ENCODE measurements at regions of chr1 and their contacts with region 1.

Region 1: DNA sequence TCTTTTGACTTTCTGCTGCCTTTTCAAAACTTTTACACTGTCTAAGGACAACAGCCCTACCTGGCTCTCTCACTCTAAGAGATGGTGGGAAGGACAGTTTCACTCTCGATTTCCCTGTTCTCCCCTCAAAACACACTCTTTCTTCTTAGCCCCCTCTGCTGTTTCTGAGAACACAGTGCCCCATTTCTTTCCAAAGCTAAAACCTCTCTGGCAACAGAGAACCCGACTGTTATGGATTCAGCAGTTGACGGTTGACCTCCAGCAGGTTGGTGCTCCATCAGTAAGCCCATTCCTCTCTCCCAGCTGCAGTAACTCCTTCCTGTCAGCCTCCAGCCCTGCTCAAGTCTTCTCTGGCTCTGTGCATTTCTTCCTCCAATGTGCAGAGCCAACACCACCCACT is 88.2 kb upstream of the ABCD3 start:
- DNase-seq: no peak
- H3K4me3 ChIP-seq: no peak overlapping the region
- H3K27ac ChIP-seq: no peak overlapping the region
- H3K4me1 ChIP-seq: peaks cover 78% of the 10 kb centered on the region
- H3K27me3 ChIP-seq: no peaks in the 10 kb centered on the region
- CTCF ChIP-seq: peak; percentile 30; the same call in 1 of the 2 replicates

Region 2: DNA sequence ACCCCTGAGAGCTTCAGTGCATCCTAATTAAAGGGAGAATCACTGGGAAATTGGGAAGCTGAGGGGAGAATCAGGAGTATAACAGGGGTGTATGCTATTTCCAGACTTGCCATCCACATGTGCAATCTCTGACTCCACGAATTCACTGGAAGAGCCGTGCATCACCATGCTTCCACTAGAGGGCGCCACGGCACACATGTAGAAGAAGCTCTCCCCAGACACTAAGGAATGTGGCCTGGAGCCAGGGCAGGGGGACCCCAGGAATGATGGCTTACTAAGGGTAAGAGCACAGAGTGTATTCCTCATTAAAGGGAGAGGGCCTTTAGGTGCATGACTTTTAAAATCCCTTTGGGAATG is 290.5 kb before region 1 on chr1:
- CTCF ChIA-PET with region 1: interaction called, 17 read pairs
- POLR2A ChIA-PET with region 1: interaction called, 4 read pairs
- intact Hi-C with region 1: no loop called
- DNase-seq: peak; percentile 63 to 68
- H3K4me3 ChIP-seq: no peak overlapping the region
- H3K27ac ChIP-seq: no peak overlapping the region
- H3K4me1 ChIP-seq: peaks cover 40% of the 10 kb centered on the region
- H3K27me3 ChIP-seq: no peaks in the 10 kb centered on the region
- CTCF ChIP-seq: peak; percentile 99

Region 3: DNA sequence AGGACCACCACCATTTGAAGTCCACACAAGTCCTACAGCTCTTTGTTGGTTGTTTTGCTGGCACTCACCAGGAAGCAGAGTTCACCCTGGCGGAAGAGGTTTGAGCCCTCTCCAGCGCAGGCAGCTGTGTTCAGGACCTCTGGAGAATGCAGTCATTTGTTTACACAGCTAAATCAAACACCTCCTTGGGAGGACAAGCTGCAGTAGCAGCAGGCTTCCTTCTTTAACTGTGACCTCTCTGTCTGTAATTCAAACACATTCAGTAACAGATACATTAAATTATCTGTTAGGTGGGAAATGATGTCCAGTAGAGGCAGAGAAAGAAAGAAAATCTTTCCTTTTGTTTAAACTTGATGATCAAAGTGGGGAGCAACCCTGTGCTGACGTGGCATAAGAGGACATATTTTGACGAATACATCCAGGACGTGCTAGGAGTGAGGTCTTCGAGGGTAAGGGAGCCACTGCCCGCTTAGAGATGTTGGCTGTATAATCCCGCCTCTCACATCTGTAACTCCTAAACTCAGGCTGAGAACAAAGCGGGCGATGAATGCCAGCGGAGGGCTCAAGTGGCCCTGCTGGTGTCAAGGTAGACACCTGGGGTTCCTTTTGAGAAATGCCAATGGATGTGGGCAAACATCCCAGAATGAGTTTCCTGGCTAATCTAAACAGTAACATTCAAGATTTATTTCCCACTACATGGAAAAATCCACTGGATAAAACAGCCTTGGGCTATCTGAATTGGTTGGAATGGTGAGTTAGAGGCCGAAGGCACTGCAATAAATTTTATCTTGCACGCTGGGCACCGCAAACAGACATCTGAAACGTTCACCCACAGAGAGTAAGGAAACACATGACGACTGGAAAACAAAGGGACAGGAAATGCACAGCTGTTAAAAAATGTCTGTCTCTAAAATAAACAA is 260.7 kb before region 1 on chr1:
- CTCF ChIA-PET with region 1: interaction called, 11 read pairs
- POLR2A ChIA-PET with region 1: interaction called, 3 read pairs
- intact Hi-C with region 1: loop called (anchors 1 kb)
- DNase-seq: peak; percentile 58 to 97
- H3K4me3 ChIP-seq: no peak overlapping the region
- H3K27ac ChIP-seq: peak overlapping the region; percentile 89
- H3K4me1 ChIP-seq: peaks cover 54% of the 10 kb centered on the region
- H3K27me3 ChIP-seq: no peaks in the 10 kb centered on the region
- CTCF ChIP-seq: no peak

Region 4: GRCh38 chr1:94115900-94116436 is 214.0 kb before region 1 on chr1:
- CTCF ChIA-PET with region 1: no interaction called
- POLR2A ChIA-PET with region 1: interaction called, 4 read pairs
- intact Hi-C with region 1: loop called (anchors 5 kb)
- DNase-seq: no peak
- H3K4me3 ChIP-seq: no peak overlapping the region
- H3K27ac ChIP-seq: peak overlapping the region; percentile 39
- H3K4me1 ChIP-seq: peaks cover 49% of the 10 kb centered on the region
- H3K27me3 ChIP-seq: no peaks in the 10 kb centered on the region
- CTCF ChIP-seq: no peak

Region 5: GRCh38 chr1:94258873-94259331 is 71.1 kb before region 1 on chr1:
- CTCF ChIA-PET with region 1: no interaction called
- POLR2A ChIA-PET with region 1: interaction called, 6 read pairs
- intact Hi-C with region 1: loop called (anchors 1 kb)
- DNase-seq: peak; percentile 91 to 100
- H3K4me3 ChIP-seq: peak overlapping the region; percentile 13; the same call in 1 of the 2 replicates
- H3K27ac ChIP-seq: peak overlapping the region; percentile 98
- H3K4me1 ChIP-seq: peaks cover 74% of the 10 kb centered on the region
- H3K27me3 ChIP-seq: no peaks in the 10 kb centered on the region
- CTCF ChIP-seq: no peak

Region 6: GRCh38 chr1:94362466-94363058 is 32.6 kb after region 1 on chr1:
- CTCF ChIA-PET with region 1: no interaction called
- POLR2A ChIA-PET with region 1: no interaction called
- intact Hi-C with region 1: no loop called
- DNase-seq: no peak
- H3K4me3 ChIP-seq: no peak overlapping the region
- H3K27ac ChIP-seq: no peak overlapping the region
- H3K4me1 ChIP-seq: 0 out of 2 replicates have a peak, but pooled peaks cover 4% of the 10 kb centered on the region
- H3K27me3 ChIP-seq: peaks cover 10% of the 10 kb centered on the region; the same call in 1 of the 2 replicates
- CTCF ChIP-seq: no peak

Region 7: DNA sequence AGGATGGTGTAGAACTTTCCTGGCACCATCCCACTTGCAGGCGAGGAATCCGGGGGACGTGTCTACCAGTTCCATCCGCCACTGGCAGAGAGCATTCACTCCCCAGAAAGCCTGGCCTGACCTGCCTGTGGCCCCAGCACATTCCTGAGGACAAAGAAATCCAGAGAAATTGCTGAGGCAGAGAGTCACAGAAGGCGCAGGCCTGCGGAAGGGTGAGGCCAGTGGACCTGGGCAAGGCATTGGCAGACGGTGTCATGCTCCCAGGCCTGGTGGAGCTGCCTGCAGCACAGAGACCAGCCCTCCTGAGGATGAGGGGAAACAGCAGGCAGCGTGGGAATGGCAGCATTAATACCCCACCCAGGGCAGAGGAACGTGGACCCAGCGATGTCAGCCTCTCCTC is 292.8 kb after region 1 on chr1:
- CTCF ChIA-PET with region 1: no interaction called
- POLR2A ChIA-PET with region 1: no interaction called
- intact Hi-C with region 1: no loop called
- DNase-seq: peak; percentile 95 to 99
- H3K4me3 ChIP-seq: peak overlapping the region; percentile 41; the same call in 1 of the 2 replicates
- H3K27ac ChIP-seq: peak overlapping the region; percentile 99
- H3K4me1 ChIP-seq: peaks cover 72% of the 10 kb centered on the region
- H3K27me3 ChIP-seq: no peaks in the 10 kb centered on the region
- CTCF ChIP-seq: no peak

Region 8: GRCh38 chr1:94693029-94693428 is 363.0 kb after region 1 on chr1:
- CTCF ChIA-PET with region 1: no interaction called
- POLR2A ChIA-PET with region 1: no interaction called
- intact Hi-C with region 1: no loop called
- DNase-seq: no peak
- H3K4me3 ChIP-seq: no peak overlapping the region
- H3K27ac ChIP-seq: no peak overlapping the region
- H3K4me1 ChIP-seq: peaks cover 2% of the 10 kb centered on the region
- H3K27me3 ChIP-seq: no peaks in the 10 kb centered on the region
- CTCF ChIP-seq: no peak

Region 9: GRCh38 chr1:95547005-95547404 is 1217.0 kb after region 1 on chr1:
- CTCF ChIA-PET with region 1: interaction called, 10 read pairs
- POLR2A ChIA-PET with region 1: no interaction called
- intact Hi-C with region 1: no loop called
- DNase-seq: no peak
- H3K4me3 ChIP-seq: no peak overlapping the region
- H3K27ac ChIP-seq: no peak overlapping the region
- H3K4me1 ChIP-seq: no peaks in the 10 kb centered on the region
- H3K27me3 ChIP-seq: no peaks in the 10 kb centered on the region
- CTCF ChIP-seq: no peak

Measured in PC-9 (cell line).